ENCODE measurements at regions of chr12 and their contacts with region 1.

Region 1: GRCh38 chr12:67648521-67649260 is at the start of gene DYRK2:
- DNase-seq: peak; percentile 75
- ATAC-seq: peak; percentile 44
- H3K4me3 ChIP-seq: peak within 1 kb of the TSS; percentile 96
- H3K27ac ChIP-seq: peak within 1 kb of the TSS; percentile 35
- H3K4me1 ChIP-seq: peaks cover 22% of the 10 kb centered on the region
- H3K27me3 ChIP-seq: no peaks in the 10 kb centered on the region
- CTCF ChIP-seq: no peak
- total RNA-seq, gene DYRK2: 20.6 and 26.3 TPM in 2 replicates

Region 2: GRCh38 chr12:67355578-67356379 is 292.9 kb before region 1 on chr12:
- CTCF ChIA-PET with region 1: no interaction called
- POLR2A ChIA-PET with region 1: no interaction called
- intact Hi-C with region 1: loop called (anchors 1 kb)
- DNase-seq: peak; percentile 70
- ATAC-seq: peak; percentile 56
- H3K4me3 ChIP-seq: no peak overlapping the region
- H3K27ac ChIP-seq: no peak overlapping the region
- H3K4me1 ChIP-seq: peaks cover 5% of the 10 kb centered on the region
- H3K27me3 ChIP-seq: no peaks in the 10 kb centered on the region
- CTCF ChIP-seq: peak; percentile 87

Region 3: GRCh38 chr12:67441736-67442346 is 206.8 kb before region 1 on chr12:
- CTCF ChIA-PET with region 1: no interaction called
- POLR2A ChIA-PET with region 1: no interaction called
- intact Hi-C with region 1: loop called (anchors 2 kb)
- DNase-seq: peak; percentile 82
- ATAC-seq: peak; percentile 98
- H3K4me3 ChIP-seq: no peak overlapping the region
- H3K27ac ChIP-seq: no peak overlapping the region
- H3K4me1 ChIP-seq: peaks cover 9% of the 10 kb centered on the region; the same call in 1 of the 2 replicates
- H3K27me3 ChIP-seq: no peaks in the 10 kb centered on the region
- CTCF ChIP-seq: peak; percentile 89

Region 4: DNA sequence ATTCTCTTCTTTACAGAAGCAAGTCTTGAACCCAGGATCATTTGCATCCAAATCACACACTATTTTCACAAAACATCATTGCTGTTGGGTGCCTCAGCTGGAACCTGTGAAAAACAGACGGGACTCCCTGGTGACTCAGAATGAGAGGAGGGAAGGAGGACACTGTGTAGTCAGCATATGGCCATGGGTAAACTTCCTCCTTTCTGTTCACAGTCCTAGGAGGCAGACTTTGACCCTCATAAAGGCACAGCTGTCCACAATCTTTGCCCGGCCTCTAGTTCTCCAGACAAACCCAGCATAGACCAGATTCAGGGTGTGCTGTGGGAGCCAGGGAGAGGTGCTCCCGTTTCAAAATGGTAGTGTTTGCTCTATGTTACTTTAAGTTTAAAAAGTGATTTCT is 61.9 kb after region 1 on chr12:
- CTCF ChIA-PET with region 1: no interaction called
- POLR2A ChIA-PET with region 1: no interaction called
- intact Hi-C with region 1: loop called (anchors 5 kb)
- DNase-seq: peak; percentile 83
- ATAC-seq: peak; percentile 80
- H3K4me3 ChIP-seq: no peak overlapping the region
- H3K27ac ChIP-seq: peak overlapping the region; percentile 19; the same call in 1 of the 2 replicates
- H3K4me1 ChIP-seq: peaks cover 44% of the 10 kb centered on the region
- H3K27me3 ChIP-seq: no peaks in the 10 kb centered on the region
- CTCF ChIP-seq: no peak

Region 5: GRCh38 chr12:67765776-67766767 is 117.4 kb after region 1 on chr12:
- CTCF ChIA-PET with region 1: no interaction called
- POLR2A ChIA-PET with region 1: no interaction called
- intact Hi-C with region 1: loop called (anchors 2 kb)
- DNase-seq: peak; percentile 94
- ATAC-seq: peak; percentile 97
- H3K4me3 ChIP-seq: no peak overlapping the region
- H3K27ac ChIP-seq: peak overlapping the region; percentile 81
- H3K4me1 ChIP-seq: peaks cover 19% of the 10 kb centered on the region
- H3K27me3 ChIP-seq: no peaks in the 10 kb centered on the region
- CTCF ChIP-seq: no peak

Region 6: GRCh38 chr12:67827820-67828383 is 179.2 kb after region 1 on chr12:
- CTCF ChIA-PET with region 1: no interaction called
- POLR2A ChIA-PET with region 1: no interaction called
- intact Hi-C with region 1: loop called (anchors 5 kb)
- DNase-seq: peak; percentile 95
- ATAC-seq: peak; percentile 99
- H3K4me3 ChIP-seq: peak overlapping the region; percentile 65
- H3K27ac ChIP-seq: peak overlapping the region; percentile 78
- H3K4me1 ChIP-seq: peaks cover 18% of the 10 kb centered on the region
- H3K27me3 ChIP-seq: no peaks in the 10 kb centered on the region
- CTCF ChIP-seq: no peak

Region 7: GRCh38 chr12:67943226-67943892 is 294.7 kb after region 1 on chr12:
- CTCF ChIA-PET with region 1: interaction called, 4 read pairs
- POLR2A ChIA-PET with region 1: interaction called, 3 read pairs
- intact Hi-C with region 1: loop called (anchors 1 kb)
- DNase-seq: peak; percentile 90
- ATAC-seq: peak; percentile 68
- H3K4me3 ChIP-seq: no peak overlapping the region
- H3K27ac ChIP-seq: no peak overlapping the region
- H3K4me1 ChIP-seq: peaks cover 29% of the 10 kb centered on the region
- H3K27me3 ChIP-seq: no peaks in the 10 kb centered on the region
- CTCF ChIP-seq: peak; percentile 85

Region 8: DNA sequence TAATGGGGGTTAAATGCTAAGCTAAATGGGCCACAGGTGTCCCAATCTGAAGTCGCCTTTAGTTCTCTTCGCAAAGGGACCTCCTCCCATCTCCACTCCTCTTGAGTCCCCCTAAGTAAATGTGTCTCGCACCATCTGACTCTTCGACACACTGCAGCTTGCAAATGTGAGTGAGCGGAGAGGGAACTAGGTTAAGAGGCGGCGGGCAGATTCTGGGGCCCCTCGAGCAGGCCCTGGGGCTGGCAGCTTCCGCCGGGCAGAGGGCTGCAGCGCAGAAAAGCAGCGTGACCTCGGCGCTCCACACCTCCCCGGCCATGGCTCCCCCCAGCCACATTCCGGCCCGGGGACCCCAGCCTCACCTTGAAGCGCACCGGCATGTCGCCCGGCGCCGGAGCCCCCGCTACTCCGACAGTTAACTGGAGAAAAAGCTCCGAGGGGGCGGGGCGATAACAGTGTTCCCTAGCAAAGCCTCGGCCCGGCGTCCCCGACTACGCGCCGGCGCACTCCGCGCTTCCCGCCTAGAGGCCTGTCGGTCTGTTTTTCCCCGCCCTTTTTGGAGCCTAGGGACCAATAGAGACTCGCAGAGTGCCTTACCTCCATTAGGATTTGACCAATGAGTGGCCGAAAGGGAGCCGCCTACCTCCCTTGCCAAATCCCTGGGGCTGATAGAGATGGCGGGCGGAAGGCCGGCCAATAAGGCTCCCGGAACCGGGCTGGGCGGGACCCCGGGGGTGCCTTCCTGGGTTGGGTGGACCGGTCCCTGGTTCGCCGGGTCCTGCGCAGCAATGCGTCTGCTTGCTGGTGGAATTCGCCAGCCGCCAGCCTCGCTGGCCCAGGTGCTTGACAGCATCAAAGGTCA is 683.4 kb after region 1 on chr12 and contains the start of gene MDM1:
- CTCF ChIA-PET with region 1: no interaction called
- POLR2A ChIA-PET with region 1: no interaction called
- intact Hi-C with region 1: no loop called
- DNase-seq: peak; percentile 99
- ATAC-seq: peak; percentile 95
- H3K4me3 ChIP-seq: peak within 1 kb of the TSS; percentile 83
- H3K27ac ChIP-seq: no peak within 1 kb of the TSS
- H3K4me1 ChIP-seq: peaks cover 22% of the 10 kb centered on the region
- H3K27me3 ChIP-seq: no peaks in the 10 kb centered on the region
- CTCF ChIP-seq: no peak
- total RNA-seq, gene MDM1: 10.4 and 19.2 TPM in 2 replicates